Left cardiac atrium (tissue), 4 donors: ENCODE measurements at regions of chr2 and their contacts with region 1.

Region 1: DNA sequence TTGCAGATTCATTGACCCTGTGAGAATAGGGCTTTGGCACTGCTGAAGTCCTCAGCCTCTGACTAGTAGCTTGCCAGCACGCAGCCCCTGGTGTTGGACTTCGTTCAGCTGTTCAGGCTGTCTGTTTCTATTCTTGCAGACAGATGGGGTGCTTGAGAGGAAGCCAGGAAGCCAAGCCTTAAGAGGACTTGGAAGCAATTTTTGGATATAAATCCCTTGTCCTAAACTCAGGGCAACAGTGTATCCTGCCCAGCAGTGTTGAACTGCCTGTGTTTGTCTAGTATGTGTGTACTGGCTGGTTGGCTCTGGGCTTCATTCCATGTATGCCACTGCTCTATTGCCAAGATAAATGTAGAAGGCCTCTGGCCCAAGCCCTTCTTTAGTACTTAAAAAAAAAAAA is 108.6 kb downstream of the COMMD1 start:
- DNase-seq: peak; percentile 60
- ATAC-seq: peak; percentile 97 to 98

Region 2: GRCh38 chr2:61962095-61962984 is 51.8 kb before region 1 on chr2:
- intact Hi-C with region 1: no loop called
- DNase-seq: no peak
- ATAC-seq: no peak

Region 3: GRCh38 chr2:62186156-62186905 is 172.2 kb after region 1 on chr2:
- intact Hi-C with region 1: loop called (anchors 10 kb)
- DNase-seq: no peak
- ATAC-seq: peak; percentile 51 to 56